B cell (primary cell): ENCODE measurements at regions of chr15 and their contacts with region 1.

Region 1: DNA sequence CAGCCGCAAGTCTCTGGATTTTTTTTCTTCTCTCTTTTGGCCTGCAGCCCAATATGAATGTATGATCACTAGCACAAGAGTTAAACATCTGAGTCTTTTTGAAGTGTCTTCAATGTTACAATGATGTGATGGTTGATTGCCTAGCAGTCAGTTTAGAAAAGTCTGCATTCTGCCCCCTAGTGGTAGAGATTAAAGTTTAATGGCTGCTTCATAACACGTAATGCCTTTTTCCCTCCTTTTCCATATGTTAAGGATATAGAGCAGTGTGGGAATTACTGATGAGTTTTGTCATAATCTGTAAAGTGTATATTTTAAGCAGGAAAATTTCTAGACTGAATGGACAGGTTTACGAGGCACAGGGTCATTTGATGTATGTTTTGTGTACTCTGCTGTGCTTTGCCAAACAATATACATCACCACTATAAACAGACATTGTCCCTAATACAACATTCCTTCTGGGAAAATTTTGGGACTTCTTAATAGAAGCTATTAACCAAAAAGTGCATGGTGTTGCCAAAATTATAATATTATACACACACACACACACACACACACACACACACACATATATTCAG is 1038.5 kb upstream of the NR2F2 start:
- DNase-seq: peak; percentile 15
- ATAC-seq: no peak
- H3K4me3 ChIP-seq: no peak overlapping the region
- H3K4me3 Mint-ChIP-seq: no peak overlapping the region
- H3K27ac ChIP-seq: no peak overlapping the region
- H3K27ac Mint-ChIP-seq: no peak overlapping the region
- H3K4me1 ChIP-seq: no peaks in the 10 kb centered on the region
- H3K4me1 Mint-ChIP-seq: no peaks in the 10 kb centered on the region
- H3K27me3 ChIP-seq: no peaks in the 10 kb centered on the region
- H3K27me3 Mint-ChIP-seq: peaks cover 3% of the 10 kb centered on the region
- CTCF ChIP-seq: peak; percentile 56

Region 2: GRCh38 chr15:94404733-94405283 is 887.2 kb before region 1 on chr15:
- CTCF ChIA-PET with region 1: no interaction called
- POLR2A ChIA-PET with region 1: no interaction called
- intact Hi-C with region 1: loop called (anchors 5 kb)
- DNase-seq: no peak
- ATAC-seq: no peak
- H3K4me3 ChIP-seq: no peak overlapping the region
- H3K4me3 Mint-ChIP-seq: no peak overlapping the region
- H3K27ac ChIP-seq: no peak overlapping the region
- H3K27ac Mint-ChIP-seq: no peak overlapping the region
- H3K4me1 ChIP-seq: no peaks in the 10 kb centered on the region
- H3K4me1 Mint-ChIP-seq: no peaks in the 10 kb centered on the region
- H3K27me3 ChIP-seq: no peaks in the 10 kb centered on the region
- H3K27me3 Mint-ChIP-seq: no peaks in the 10 kb centered on the region
- CTCF ChIP-seq: no peak

Region 3: DNA sequence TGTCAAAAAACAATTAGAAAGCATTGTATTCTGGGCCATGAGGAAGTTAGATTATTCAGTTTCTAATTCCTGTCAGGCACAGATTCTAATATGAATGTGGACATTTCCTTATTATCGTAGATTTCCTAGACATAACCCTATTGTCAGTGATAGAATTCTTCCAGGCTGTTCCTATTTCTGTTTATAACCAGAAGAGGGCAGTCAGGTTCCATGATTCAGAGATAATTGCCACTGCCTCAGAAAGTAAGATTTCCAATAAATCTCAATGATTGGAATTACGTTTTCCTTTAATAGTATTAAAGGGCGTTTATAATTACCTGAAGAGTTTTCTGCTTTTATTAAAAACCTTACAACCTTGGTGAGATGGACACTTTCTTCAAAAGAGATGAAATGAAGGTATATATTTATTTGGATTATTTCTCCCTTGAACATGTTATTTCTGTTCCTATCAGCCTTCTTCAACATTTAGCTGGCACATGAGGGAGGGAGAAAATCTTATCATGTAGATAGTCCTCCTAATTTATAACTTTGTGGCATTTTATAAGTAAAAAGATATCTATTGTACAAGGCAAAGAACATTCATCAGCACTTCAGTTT is 621.4 kb before region 1 on chr15:
- CTCF ChIA-PET with region 1: interaction called, 3 read pairs
- POLR2A ChIA-PET with region 1: no interaction called
- intact Hi-C with region 1: loop called (anchors 5 kb)
- DNase-seq: peak; percentile 21
- ATAC-seq: no peak
- H3K4me3 ChIP-seq: no peak overlapping the region
- H3K4me3 Mint-ChIP-seq: no peak overlapping the region
- H3K27ac ChIP-seq: no peak overlapping the region
- H3K27ac Mint-ChIP-seq: no peak overlapping the region
- H3K4me1 ChIP-seq: no peaks in the 10 kb centered on the region
- H3K4me1 Mint-ChIP-seq: no peaks in the 10 kb centered on the region
- H3K27me3 ChIP-seq: no peaks in the 10 kb centered on the region
- H3K27me3 Mint-ChIP-seq: peaks cover 24% of the 10 kb centered on the region
- CTCF ChIP-seq: peak; percentile 69